ENCODE measurements at regions of chr16 and their contacts with region 1.

Region 1: GRCh38 chr16:68417711-68418301 is 30.5 kb downstream of the SMPD3 start:
- DNase-seq: peak; percentile 86
- H3K4me3 Mint-ChIP-seq: peak overlapping the region; percentile 64
- H3K27ac Mint-ChIP-seq: peak overlapping the region; percentile 90
- H3K4me1 Mint-ChIP-seq: peaks cover 48% of the 10 kb centered on the region
- H3K27me3 Mint-ChIP-seq: no peaks in the 10 kb centered on the region

Region 2: DNA sequence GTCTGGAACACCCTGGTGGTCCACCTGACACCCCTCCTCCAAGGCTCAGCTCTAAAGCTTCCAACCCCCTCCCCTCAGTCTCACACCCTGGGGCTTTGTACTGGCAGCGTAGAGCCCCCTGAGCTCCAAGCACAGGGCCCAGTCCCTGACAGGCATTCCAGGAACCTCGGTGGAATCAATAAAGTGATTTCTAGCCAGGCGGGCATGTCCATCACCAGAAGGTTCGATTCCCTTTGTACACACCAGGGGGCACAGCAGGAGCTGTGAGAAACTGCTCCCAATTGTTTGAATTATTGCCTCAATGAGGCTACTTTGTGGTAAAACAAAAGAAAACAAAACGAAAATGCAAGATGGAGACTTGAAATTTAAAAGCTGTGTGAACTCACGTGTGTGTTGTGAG is 21.3 kb before region 1 on chr16:
- CTCF ChIA-PET with region 1: interaction called, 22 read pairs
- POLR2A ChIA-PET with region 1: no interaction called
- intact Hi-C with region 1: no loop called
- DNase-seq: peak; percentile 63
- H3K4me3 Mint-ChIP-seq: no peak overlapping the region
- H3K27ac Mint-ChIP-seq: no peak overlapping the region
- H3K4me1 Mint-ChIP-seq: peaks cover 16% of the 10 kb centered on the region
- H3K27me3 Mint-ChIP-seq: no peaks in the 10 kb centered on the region

Region 3: GRCh38 chr16:68401871-68402747 is 15.7 kb before region 1 on chr16:
- CTCF ChIA-PET with region 1: interaction called, 22 read pairs
- POLR2A ChIA-PET with region 1: no interaction called
- intact Hi-C with region 1: loop called (anchors 2 kb)
- DNase-seq: peak; percentile 33
- H3K4me3 Mint-ChIP-seq: no peak overlapping the region
- H3K27ac Mint-ChIP-seq: no peak overlapping the region
- H3K4me1 Mint-ChIP-seq: peaks cover 15% of the 10 kb centered on the region
- H3K27me3 Mint-ChIP-seq: no peaks in the 10 kb centered on the region

Region 4: DNA sequence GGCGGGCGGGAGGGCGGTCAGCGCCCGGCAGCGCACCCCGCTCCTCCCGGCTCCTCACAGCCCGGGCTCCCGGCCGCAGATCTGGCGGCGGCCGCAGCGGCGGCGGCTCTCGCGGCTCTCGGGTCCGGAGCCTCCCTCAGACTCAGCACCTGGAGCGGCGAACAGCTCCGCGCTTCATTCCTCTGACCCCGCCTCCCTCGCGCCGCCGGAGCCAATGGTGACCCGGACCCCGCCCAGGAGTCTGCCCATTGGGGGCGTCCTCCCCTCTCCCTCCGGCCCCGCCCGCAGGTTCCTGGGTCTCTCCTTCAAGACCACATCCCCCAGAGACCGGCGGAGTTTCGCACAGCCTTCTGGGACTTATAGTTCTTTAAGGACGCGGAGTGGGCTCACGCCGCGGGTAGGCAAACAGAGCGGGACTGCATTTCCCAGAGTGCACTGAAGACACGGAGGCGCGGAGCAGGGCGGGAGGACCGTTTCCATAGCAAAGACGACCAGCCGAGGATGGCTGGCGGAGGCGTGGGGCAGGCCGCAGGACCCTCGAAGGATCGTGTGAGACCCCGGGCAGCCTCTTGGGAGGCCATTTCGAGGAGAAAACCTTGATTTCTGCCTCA is 30.7 kb after region 1 on chr16 and contains the start of gene SMPD3:
- CTCF ChIA-PET with region 1: interaction called, 3 read pairs
- POLR2A ChIA-PET with region 1: no interaction called
- intact Hi-C with region 1: loop called (anchors 1 kb)
- DNase-seq: peak; percentile 99
- H3K4me3 Mint-ChIP-seq: peak within 1 kb of the TSS; percentile 73
- H3K27ac Mint-ChIP-seq: no peak within 1 kb of the TSS
- H3K4me1 Mint-ChIP-seq: peaks cover 20% of the 10 kb centered on the region
- H3K27me3 Mint-ChIP-seq: peaks cover 17% of the 10 kb centered on the region
- total RNA-seq, gene SMPD3: 0.07 to 0.12 TPM

Region 5: DNA sequence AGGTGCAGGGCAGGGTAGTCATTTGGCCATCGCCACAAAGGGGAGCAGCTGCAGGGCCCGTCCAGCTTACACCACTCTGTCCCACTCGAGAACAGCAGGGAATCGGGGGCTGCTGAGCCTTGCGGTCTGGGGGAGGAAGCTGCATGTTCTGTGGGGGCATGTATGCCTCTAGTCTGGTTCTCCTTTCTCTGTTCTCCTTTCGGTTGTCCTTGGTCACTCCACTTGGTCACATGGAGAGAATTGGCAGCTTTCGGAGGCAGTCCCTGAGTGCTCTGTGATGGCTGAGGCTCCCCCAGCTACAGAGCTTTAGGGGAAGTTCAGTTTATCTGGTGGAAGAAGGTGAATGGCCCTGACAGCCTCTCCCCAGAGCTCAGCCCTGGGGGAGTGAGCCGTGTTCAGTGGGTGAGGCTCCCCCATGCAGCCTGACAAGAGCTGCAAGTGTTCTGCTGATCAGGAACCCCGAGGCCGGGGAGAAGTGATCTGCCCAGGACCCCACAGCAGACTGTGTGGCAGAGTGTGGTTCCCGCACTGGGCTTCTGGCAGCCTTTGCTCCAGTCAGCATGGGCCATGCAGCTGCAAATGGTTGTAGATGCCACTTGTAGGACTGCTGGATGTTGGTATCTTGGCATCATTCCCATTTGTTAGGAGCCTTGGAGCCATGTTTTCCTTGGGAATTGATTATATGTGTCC is 52.8 kb after region 1 on chr16:
- CTCF ChIA-PET with region 1: interaction called, 4 read pairs
- POLR2A ChIA-PET with region 1: no interaction called
- intact Hi-C with region 1: loop called (anchors 5 kb)
- DNase-seq: no peak
- H3K4me3 Mint-ChIP-seq: peak overlapping the region; percentile 64
- H3K27ac Mint-ChIP-seq: peak overlapping the region; percentile 12
- H3K4me1 Mint-ChIP-seq: peaks cover 37% of the 10 kb centered on the region
- H3K27me3 Mint-ChIP-seq: no peaks in the 10 kb centered on the region

Region 6: GRCh38 chr16:68512183-68512582 is 94.4 kb after region 1 on chr16:
- CTCF ChIA-PET with region 1: interaction called, 22 read pairs
- POLR2A ChIA-PET with region 1: no interaction called
- intact Hi-C with region 1: no loop called
- DNase-seq: no peak
- H3K4me3 Mint-ChIP-seq: no peak overlapping the region
- H3K27ac Mint-ChIP-seq: no peak overlapping the region
- H3K4me1 Mint-ChIP-seq: no peaks in the 10 kb centered on the region
- H3K27me3 Mint-ChIP-seq: peaks cover 3% of the 10 kb centered on the region

Region 7: DNA sequence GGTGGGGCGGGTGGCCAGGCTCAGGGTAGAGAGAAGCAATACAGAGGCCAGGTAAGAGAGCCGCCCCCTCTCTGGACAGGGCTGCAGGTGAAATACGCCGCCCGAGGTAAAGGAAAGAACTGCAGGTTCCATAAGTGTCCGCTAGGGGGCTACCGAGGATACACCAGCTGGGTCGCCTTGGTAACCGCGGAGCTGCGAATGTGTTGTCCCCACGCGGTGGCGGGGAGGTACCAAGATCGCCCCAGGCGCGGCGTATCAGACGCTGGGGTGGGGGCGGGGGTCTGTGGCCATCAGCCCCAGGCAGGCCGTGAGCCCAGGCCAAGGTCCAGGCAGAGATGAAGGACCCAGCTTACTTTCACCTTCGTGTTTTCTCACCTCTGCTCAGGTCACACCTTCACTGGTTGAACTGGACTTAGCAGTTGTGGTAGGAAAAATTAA is 102.9 kb after region 1 on chr16:
- CTCF ChIA-PET with region 1: interaction called, 10 read pairs
- POLR2A ChIA-PET with region 1: no interaction called
- intact Hi-C with region 1: no loop called
- DNase-seq: peak; percentile 92
- H3K4me3 Mint-ChIP-seq: no peak overlapping the region
- H3K27ac Mint-ChIP-seq: no peak overlapping the region
- H3K4me1 Mint-ChIP-seq: peaks cover 6% of the 10 kb centered on the region
- H3K27me3 Mint-ChIP-seq: peaks cover 1% of the 10 kb centered on the region